ENCODE measurements at regions of chr21 and their contacts with region 1.

Region 1: GRCh38 chr21:28745131-28746016 is 247.3 kb downstream of the LTN1 start:
- ATAC-seq: peak; percentile 81 to 88 (median 86)
- H3K4me3 ChIP-seq: peak overlapping the region in 4 of 5 donors; percentile 16 to 22 (median 18)
- H3K27ac ChIP-seq: no peak overlapping the region
- H3K4me1 ChIP-seq: no peaks in the 10 kb centered on the region

Region 2: DNA sequence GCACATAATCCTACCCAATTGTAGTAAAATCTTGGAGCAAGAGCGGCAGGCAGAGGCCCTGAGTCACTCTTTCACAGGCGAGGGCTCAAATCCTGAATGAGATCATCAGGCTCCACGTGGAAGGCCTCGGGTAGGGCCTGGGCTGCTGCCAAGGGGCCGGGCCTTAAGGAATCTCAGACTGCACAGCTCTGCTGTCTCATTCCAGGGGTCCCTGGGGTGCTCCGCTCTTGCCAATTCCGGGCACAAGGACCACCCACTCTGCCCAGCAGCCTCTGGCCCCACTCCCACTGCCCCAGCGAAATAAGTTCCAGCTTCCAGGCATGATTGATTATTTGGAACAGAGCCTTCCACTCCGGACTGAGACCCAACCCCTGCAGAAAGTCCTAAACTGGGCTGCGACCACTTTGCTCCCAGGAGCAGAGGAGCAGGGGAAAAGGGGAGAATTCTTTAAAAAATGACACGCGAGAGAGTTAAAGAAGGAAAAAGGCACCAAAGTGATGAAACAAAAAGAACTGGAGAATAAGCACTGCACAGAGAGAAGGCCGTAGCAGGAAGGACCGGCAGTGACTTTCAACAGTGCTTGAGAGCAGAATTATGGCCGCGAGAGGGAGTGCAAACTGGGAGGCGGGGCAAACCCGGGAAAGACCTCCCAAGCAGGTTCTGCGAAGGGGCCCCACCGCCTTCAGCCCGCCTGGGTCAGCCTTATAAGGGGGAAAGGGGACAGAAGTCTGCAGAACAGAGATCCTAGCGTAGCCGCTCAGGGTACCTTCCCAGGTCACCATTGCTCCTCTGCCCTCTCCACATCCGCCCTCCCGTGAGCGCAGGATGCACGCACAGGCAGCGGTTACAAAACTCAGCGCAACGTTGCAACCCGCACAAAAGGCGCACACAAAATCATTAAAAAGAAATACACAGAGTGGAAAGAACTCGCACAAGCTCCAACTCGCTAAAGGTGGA is 1902.1 kb before region 1 on chr21:
- in situ Hi-C with region 1: loop called in 2 of 9 experiments (anchors 25 kb)
- ATAC-seq: peak; percentile 38 to 64 (median 54)
- H3K4me3 ChIP-seq: peak overlapping the region; percentile 47 to 89 (median 75)
- H3K27ac ChIP-seq: peak overlapping the region; percentile 90
- H3K4me1 ChIP-seq: peaks cover 8% of the 10 kb centered on the region in 2 donors

Region 3: DNA sequence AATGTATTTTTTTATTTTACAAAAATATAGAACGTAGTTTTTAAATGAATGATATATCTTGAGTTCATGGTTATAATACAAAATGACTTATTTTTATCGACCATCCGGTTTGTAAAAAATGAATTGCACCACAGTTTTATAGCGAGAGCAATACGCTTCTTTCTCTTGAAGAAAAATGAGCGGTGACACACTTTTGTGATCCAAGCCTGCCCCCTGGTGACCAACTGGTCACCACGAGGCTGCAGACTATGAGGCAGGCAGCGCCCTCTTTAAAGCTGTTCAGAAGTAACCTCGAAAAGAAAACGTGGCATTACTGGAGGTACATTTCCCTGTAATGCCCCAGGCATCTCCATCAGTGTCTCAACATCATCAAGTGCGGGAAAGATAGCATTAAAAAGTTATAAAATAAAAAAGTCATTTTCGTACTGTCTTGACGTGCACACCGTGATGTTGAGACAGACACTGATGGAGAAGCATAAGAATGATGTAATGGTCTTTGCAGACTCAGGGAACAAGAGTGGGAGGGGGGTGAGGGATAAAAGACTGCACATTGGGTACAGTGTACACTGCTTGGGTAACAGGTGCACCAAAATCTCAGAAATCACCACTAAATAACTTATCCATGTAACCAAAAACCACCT is 1044.3 kb before region 1 on chr21:
- in situ Hi-C with region 1: loop called in 4 of 9 experiments (anchors 10 to 25 kb)
- ATAC-seq: peak; percentile 82 to 98 (median 91)
- H3K4me3 ChIP-seq: peak overlapping the region in 2 of 5 donors; percentile 13 to 20
- H3K27ac ChIP-seq: no peak overlapping the region
- H3K4me1 ChIP-seq: peaks cover 0 to 2% of the 10 kb centered on the region in 2 donors

Region 4: GRCh38 chr21:28336314-28336713 is 409.1 kb before region 1 on chr21:
- in situ Hi-C with region 1: loop called in 4 of 9 experiments (anchors 10 to 25 kb)
- ATAC-seq: peak in 3 of 8 experiments; percentile 32 to 54 (median 41)
- H3K4me3 ChIP-seq: no peak overlapping the region
- H3K27ac ChIP-seq: no peak overlapping the region
- H3K4me1 ChIP-seq: no peaks in the 10 kb centered on the region

Region 5: DNA sequence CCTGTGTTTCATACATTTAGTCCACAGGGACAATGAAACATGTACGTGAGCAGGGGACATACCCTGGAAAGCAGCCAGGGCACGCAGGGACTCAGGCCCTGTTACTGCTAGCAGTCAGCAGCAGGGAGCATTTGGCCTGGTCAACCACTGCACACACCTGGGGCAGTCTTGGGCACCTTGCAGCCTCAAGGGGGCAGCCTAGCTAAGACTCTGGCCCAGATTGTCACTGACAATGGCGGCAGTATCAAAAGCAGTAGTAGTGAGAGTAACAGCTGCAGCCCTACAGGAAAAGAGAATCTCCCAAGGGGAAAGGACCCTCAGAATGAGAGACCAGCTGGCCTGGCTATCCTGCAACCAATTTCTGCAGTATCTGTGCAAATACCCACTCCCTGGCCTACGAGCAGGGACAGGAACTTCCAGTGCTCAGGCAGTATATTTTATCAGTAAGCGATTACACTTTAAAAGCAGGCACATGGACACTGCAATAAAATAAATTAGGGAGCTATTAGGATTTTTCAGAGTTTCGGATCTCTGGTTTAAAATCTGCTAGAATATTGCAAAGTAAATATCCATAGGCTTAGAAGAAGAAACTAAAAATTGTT is 228.3 kb before region 1 on chr21:
- in situ Hi-C with region 1: loop called in 2 of 9 experiments (anchors 25 kb)
- ATAC-seq: peak; percentile 69 to 99 (median 84)
- H3K4me3 ChIP-seq: no peak overlapping the region
- H3K27ac ChIP-seq: no peak overlapping the region
- H3K4me1 ChIP-seq: peaks cover 0 to under 1% of the 10 kb centered on the region in 2 donors

Measured in motor neuron (in vitro differentiated cells).